CD8-positive, alpha-beta T cell (primary cell): ENCODE measurements at regions of chr1 and their contacts with region 1.

Region 1: DNA sequence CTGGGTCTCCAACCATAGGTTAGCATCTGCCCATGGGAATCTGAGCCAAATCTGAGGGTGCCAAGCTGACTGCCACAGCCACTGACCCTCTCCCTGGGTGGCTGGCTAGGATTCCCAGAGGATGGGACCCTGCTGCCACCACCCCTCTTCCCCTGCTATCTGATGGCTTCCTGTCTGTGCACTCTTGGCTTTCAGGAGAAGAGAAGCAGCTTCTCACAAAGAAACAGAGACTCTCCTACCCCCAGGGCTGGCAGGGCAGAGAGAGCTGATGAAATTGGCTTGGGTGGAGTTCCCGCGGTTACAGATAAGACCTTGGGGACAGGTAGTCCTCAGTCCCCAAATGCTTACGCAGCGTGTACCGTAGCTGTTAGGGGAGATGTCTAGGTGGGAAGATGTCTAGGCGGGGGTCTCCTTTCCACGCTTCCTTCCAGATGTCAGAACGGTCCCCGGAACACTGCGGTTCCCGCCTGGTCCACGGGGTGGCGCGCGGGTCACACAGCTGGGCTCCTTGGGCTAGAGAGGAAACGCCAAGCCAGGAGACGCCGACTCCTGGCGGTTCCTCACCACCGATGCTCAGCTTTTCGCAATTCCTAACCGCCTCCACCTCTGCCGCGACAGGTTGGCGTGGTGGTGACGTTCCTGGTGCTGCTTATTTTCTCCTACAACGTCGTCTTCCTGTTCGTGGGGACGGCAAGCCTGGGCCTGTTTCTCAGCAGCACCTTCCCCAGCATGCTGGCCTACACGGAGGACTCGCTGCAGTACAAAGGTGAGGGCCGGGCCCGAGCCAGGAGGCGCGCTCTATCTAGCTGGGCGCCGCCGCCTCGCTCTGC is 40.1 kb downstream of the ELK4 start:
- DNase-seq: peak; percentile 83 to 95 (median 91)
- ATAC-seq: peak; percentile 88
- H3K4me3 ChIP-seq: peak overlapping the region; percentile 52 to 62
- H3K4me3 Mint-ChIP-seq: peak overlapping the region; percentile 90
- H3K27ac ChIP-seq: peak overlapping the region; percentile 60 to 80
- H3K27ac Mint-ChIP-seq: peak overlapping the region; percentile 95
- H3K4me1 ChIP-seq: peaks cover 23% of the 10 kb centered on the region
- H3K4me1 Mint-ChIP-seq: peaks cover 49% of the 10 kb centered on the region
- H3K27me3 ChIP-seq: no peaks in the 10 kb centered on the region
- H3K27me3 Mint-ChIP-seq: no peaks in the 10 kb centered on the region
- CTCF ChIP-seq: peak; percentile 98

Region 2: DNA sequence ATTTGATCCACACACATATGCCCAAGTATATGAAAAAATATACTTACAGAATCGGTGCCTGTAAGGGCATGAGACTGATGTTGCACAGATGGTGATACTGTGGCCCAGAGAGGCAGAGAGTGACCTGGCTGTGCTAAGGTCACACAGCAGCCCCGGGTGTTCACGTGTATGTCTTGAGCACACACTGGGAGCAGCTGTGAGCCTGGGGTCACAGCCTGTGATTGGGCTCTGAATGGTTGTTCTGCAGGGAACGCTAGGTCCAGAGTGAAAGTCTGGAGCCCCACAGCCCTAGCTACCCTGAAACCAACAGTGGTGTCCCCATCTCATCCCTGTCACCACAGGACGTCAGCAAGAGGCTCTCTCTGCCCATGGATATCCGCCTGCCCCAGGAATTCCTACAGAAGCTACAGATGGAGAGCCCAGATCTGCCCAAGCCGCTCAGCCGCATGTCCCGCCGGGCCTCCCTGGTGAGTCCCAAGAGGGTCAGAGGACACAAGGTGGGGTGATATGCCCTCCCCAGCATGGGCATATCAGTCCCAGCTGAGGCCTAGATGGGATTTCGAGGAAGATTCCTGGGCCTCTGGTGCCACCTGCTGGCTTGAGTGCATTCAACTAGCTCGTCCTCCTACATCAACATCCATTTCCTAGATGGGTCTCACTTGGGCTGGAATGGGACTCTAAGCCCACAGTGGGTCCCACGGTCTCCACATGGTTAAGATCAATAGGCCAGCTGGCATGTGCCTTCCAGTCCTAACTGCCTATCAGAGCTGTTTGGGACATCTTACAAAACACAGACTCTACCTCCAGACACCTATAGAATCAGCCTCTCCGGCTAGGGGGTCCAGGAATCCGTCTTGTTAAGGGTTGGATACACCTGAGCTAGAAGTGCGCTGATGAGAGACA is 67.6 kb before region 1 on chr1:
- CTCF ChIA-PET with region 1: interaction called, 20 read pairs
- POLR2A ChIA-PET with region 1: no interaction called
- intact Hi-C with region 1: loop called (anchors 1 kb)
- DNase-seq: peak; percentile 47 to 82 (median 76)
- ATAC-seq: peak; percentile 70
- H3K4me3 ChIP-seq: no peak overlapping the region
- H3K4me3 Mint-ChIP-seq: no peak overlapping the region
- H3K27ac ChIP-seq: no peak overlapping the region
- H3K27ac Mint-ChIP-seq: no peak overlapping the region
- H3K4me1 ChIP-seq: no peaks in the 10 kb centered on the region
- H3K4me1 Mint-ChIP-seq: peaks cover under 1% of the 10 kb centered on the region
- H3K27me3 ChIP-seq: no peaks in the 10 kb centered on the region
- H3K27me3 Mint-ChIP-seq: no peaks in the 10 kb centered on the region
- CTCF ChIP-seq: peak; percentile 64

Region 3: DNA sequence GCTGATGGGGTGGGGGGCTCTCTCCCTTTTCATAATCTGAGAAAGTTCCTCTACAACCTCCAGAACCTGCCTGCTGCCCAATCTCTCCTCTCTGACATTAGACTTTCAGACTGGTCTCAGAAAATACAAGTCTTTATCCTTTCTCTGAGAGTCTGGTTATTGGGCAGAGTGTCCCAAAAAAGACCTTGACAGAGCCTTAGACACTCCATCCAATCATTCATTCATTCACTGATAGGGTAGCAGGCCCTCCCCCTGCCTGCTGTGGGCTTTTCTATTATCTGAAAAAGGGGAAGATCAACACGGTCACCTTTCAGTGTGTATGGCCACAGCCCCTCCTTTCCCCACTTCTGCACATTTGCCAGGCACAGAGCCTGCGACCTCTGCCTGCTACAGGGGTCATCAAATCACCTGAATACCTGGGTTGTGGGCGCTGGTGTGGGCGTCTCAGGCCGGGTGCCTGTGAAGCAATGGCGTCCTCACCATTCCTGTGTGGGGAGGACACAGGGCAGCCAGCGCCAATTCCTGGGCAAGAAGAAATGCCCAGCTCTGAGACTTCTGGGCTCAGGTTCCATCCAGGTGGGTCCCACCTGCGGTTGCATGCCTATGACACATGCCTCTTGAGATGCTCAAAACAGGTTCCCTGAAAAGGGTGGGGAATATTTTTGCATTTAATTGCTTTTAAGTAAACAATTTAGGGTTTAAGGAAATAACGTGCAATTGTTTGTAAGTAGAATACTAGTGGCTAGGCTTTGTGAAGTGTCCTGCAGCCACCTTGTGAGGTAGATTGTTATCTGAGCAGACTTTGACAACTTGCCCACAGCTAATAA is 12.7 kb before region 1 on chr1:
- CTCF ChIA-PET with region 1: interaction called, 10 read pairs
- POLR2A ChIA-PET with region 1: no interaction called
- intact Hi-C with region 1: no loop called
- DNase-seq: no peak
- ATAC-seq: no peak
- H3K4me3 ChIP-seq: no peak overlapping the region
- H3K4me3 Mint-ChIP-seq: no peak overlapping the region
- H3K27ac ChIP-seq: no peak overlapping the region
- H3K27ac Mint-ChIP-seq: no peak overlapping the region
- H3K4me1 ChIP-seq: peaks cover 20% of the 10 kb centered on the region
- H3K4me1 Mint-ChIP-seq: peaks cover 18% of the 10 kb centered on the region
- H3K27me3 ChIP-seq: no peaks in the 10 kb centered on the region
- H3K27me3 Mint-ChIP-seq: peaks cover 8% of the 10 kb centered on the region
- CTCF ChIP-seq: no peak

Region 4: GRCh38 chr1:205619376-205619775 is 27.6 kb after region 1 on chr1:
- CTCF ChIA-PET with region 1: interaction called, 37 read pairs
- POLR2A ChIA-PET with region 1: interaction called, 6 read pairs
- intact Hi-C with region 1: no loop called
- DNase-seq: no peak
- ATAC-seq: no peak
- H3K4me3 ChIP-seq: no peak overlapping the region
- H3K4me3 Mint-ChIP-seq: no peak overlapping the region
- H3K27ac ChIP-seq: no peak overlapping the region
- H3K27ac Mint-ChIP-seq: no peak overlapping the region
- H3K4me1 ChIP-seq: no peaks in the 10 kb centered on the region
- H3K4me1 Mint-ChIP-seq: peaks cover 32% of the 10 kb centered on the region
- H3K27me3 ChIP-seq: no peaks in the 10 kb centered on the region
- H3K27me3 Mint-ChIP-seq: no peaks in the 10 kb centered on the region
- CTCF ChIP-seq: no peak

Region 5: DNA sequence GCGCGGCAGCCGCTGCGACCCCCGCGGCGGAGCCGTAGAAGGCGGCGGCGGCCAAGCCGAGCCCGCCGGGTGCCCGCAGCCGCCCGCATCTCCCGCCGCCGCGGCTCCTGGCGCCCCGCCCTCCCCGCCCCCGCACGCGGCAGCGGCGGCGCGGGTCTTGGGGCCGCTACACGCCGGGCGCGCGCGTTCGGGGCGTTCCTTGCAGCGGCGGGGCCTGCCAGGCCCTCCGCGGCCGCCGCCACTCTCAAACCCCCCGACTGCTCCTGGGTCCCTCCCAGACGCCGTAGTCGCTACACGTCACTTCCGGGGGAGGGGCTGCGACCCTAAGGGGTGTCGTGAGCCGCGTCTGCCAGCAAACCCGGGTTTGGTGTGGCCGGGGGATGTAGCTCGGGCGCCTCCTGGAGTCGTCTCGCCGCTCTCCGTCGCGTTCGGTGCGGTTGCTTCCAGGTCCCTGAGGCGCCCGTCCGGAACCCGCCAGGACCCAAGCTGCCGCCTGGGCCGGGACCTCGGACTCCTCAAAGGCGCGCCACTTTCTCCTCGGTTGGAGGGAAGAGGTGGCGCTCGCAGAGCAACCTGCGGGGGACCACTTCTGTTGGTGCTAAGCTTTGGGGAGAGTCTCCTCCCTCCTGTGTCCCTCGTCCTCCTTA is 40.1 kb after region 1 on chr1 and contains the start of gene ELK4:
- CTCF ChIA-PET with region 1: interaction called, 218 read pairs
- POLR2A ChIA-PET with region 1: interaction called, 175 read pairs
- intact Hi-C with region 1: loop called (anchors 1 kb)
- DNase-seq: peak; percentile 99 to 100 (median 100)
- ATAC-seq: peak; percentile 78
- H3K4me3 ChIP-seq: peak within 1 kb of the TSS; percentile 64 to 71
- H3K4me3 Mint-ChIP-seq: peak within 1 kb of the TSS; percentile 89
- H3K27ac ChIP-seq: peak within 1 kb of the TSS; percentile 75 to 95
- H3K27ac Mint-ChIP-seq: peak within 1 kb of the TSS; percentile 99
- H3K4me1 ChIP-seq: peaks cover 37% of the 10 kb centered on the region
- H3K4me1 Mint-ChIP-seq: peaks cover 44% of the 10 kb centered on the region
- H3K27me3 ChIP-seq: no peaks in the 10 kb centered on the region
- H3K27me3 Mint-ChIP-seq: no peaks in the 10 kb centered on the region
- CTCF ChIP-seq: peak; percentile 78
- total RNA-seq, gene ELK4: 142 to 147 TPM

Region 6: GRCh38 chr1:205680073-205680851 is 88.5 kb after region 1 on chr1 and contains the start of gene SLC45A3:
- CTCF ChIA-PET with region 1: interaction called, 11 read pairs
- POLR2A ChIA-PET with region 1: no interaction called
- intact Hi-C with region 1: no loop called
- DNase-seq: peak in 8 of 9 experiments; percentile 16 to 61 (median 42)
- ATAC-seq: peak; percentile 74
- H3K4me3 ChIP-seq: peak within 1 kb of the TSS; percentile 8 to 57
- H3K4me3 Mint-ChIP-seq: peak within 1 kb of the TSS; percentile 82
- H3K27ac ChIP-seq: no peak within 1 kb of the TSS
- H3K27ac Mint-ChIP-seq: no peak within 1 kb of the TSS
- H3K4me1 ChIP-seq: peaks cover 13% of the 10 kb centered on the region
- H3K4me1 Mint-ChIP-seq: peaks cover 13% of the 10 kb centered on the region
- H3K27me3 ChIP-seq: peaks cover 0 to 3% of the 10 kb centered on the region in 2 experiments
- H3K27me3 Mint-ChIP-seq: peaks cover 13% of the 10 kb centered on the region
- CTCF ChIP-seq: no peak
- total RNA-seq, gene SLC45A3: 0.16 TPM in 1 of 2 experiments, not detected in the other

Region 7: DNA sequence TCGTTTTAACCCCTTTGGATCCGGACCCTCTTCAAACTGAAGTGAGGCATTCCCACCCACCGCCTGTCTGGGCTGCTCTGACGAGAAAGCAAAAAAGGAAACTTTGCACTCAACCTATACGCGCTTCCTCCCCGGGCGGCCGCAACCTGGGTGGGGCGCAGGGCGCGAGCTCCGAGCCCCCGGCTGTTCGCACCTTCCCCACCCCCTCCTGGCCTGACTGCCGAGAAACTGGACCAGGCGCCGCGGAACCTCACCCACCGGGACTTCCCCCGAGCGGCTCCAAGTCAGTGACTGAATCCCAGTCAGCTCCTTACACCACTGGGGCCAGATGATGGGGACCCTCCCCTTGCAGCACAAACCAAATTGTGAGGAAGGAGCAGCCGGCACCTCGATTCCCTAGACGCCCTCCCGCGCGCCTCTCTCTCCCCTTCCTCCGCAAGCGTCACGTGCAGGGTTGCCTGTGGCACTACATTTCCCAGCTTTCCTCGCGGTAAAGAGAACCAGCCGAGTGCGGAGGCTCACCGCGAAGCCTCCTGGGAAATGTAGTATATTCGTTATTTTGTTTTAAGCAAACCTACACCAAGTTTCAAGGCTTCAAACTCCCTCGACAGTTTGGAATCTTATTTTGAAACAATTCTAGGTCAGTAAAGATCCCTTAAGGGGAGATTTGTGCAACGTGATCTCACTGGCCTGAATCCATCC is 183.4 kb after region 1 on chr1 and contains the start of gene RAB29:
- CTCF ChIA-PET with region 1: interaction called, 5 read pairs
- POLR2A ChIA-PET with region 1: interaction called, 6 read pairs
- intact Hi-C with region 1: loop called (anchors 2 to 5 kb)
- DNase-seq: peak; percentile 71 to 95 (median 85)
- ATAC-seq: peak; percentile 86
- H3K4me3 ChIP-seq: peak within 1 kb of the TSS; percentile 81 to 82
- H3K4me3 Mint-ChIP-seq: peak within 1 kb of the TSS; percentile 92
- H3K27ac ChIP-seq: peak within 1 kb of the TSS; percentile 86 to 97
- H3K27ac Mint-ChIP-seq: peak within 1 kb of the TSS; percentile 97
- H3K4me1 ChIP-seq: peaks cover 33% of the 10 kb centered on the region
- H3K4me1 Mint-ChIP-seq: peaks cover 53% of the 10 kb centered on the region
- H3K27me3 ChIP-seq: no peaks in the 10 kb centered on the region
- H3K27me3 Mint-ChIP-seq: no peaks in the 10 kb centered on the region
- CTCF ChIP-seq: no peak
- total RNA-seq, gene RAB29: 14.0 to 15.9 TPM